ENCODE measurements at regions of chr1 and their contacts with region 1.

Region 1: DNA sequence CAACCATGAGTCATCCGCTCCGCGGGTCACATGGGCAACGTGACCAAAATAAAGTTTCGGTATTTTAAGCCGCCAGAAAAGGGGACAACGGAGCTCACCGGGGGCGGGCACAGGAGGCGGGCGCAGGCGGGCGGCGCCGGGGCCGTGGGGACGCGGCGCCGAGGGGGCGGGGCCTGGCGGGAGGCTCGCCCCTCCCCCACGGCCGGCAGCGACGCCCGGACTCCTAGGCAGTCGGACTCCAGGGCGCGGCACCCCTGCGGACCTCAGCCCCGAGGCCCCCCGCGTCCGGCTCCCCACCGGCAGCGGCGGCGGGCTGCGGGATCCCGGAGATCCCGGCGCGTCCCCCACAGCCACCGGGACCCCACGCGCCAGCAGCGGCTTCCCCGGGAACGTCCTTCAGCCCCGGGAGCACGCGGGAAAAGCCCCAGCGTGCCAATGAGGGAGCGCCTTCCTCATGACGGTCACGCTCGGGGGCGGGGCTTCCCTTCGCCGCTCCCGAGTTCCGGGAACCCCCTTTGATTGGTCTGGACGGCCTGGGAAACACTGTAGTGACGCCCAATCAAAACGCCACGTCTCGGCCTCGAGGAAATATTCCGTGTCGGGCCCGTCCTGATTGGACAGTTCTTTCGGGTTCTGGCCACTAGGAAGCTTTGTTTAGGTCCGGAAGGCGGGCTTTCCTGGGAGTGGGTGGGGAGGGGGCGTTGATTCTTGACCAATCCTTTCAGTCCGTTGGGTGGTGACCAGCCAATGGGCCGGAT is 515 bp upstream of the CAMTA1 start:
- DNase-seq: peak; percentile 100

Region 2: DNA sequence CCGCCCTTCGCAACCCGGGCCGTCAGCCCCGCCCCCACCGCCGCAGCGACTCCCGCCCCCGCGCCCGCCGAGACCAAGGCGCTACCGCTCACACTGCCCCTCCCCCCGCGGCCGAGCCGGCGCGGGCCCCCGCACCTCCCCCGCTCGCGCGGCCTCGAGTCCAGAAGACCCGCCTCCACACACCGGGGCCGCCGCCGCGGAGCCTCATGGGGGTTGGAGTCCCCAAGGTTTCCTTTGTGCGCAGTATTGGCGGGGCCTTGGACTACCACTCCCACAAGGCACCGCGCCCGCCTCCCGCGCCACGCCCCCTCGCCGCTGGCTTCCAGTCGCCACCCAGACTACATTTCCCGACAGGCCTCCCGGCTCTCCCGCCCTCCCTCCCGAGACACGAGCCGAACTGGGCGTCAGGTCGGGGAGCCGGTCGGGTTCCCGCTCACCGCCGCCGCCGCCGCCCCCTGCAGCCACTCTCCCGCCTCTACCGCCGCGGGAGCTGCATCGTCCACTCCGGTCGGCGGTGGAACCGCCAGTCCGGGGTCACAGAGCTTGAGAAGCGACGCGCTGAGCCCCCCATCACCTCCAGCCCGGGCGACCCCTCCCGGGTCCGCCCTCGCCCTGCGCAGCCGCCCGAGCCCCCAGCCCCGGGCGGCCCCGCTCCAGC is 171.2 kb before region 1 on chr1 and contains the start of gene PHF13:
- intact Hi-C with region 1: loop called (anchors 10 kb)
- DNase-seq: peak; percentile 100
- total RNA-seq, gene PHF13: 9.3 TPM

Region 3: GRCh38 chr1:6701437-6702153 is 83.1 kb before region 1 on chr1 and contains the start of gene DNAJC11:
- intact Hi-C with region 1: loop called (anchors 5 kb)
- DNase-seq: peak; percentile 96
- total RNA-seq, gene DNAJC11: 49.4 TPM

Region 4: DNA sequence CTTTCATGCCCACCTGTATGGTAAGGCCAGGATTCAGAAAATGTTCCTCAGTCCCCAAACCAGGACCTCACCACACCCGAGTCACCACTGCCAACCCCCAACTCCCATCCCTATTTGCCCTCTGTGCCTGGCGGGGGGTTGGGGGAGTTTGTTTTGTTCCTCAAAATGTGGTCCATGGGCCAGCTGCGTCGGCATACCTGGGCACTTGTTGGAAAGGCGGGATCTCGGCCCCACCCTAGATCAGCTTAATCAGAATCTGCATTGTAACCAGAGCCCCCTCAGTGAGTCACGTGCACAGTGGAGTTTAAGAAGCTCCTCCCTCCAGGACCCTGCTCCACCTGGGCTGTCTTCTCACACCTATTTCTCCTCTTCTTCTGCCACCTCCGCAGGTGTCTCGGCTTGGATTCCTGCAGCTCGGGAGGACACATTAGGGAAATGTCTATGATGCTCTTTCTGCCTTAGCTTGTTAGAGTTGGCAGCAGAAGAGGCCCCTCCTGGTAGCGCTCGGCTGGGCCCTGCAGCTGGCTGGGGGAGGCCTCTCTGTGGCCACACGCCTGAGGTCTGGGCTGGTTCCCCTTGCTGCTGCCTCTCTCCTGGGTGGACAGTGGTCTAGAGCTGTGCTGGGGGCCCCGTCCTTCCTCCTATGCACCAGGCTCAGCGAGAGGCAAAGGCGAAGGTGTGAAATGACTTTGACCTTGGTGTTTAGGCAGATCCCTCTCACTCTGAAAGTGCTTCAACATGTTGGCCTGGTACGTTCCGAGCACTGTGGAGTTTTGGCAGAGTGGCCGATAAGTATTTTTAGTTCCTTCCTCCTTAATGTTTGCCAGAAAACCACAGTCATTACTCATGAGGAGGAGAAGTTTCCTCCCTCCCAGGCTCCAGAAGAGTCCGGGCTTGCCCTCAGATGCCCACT is 41.3 kb before region 1 on chr1:
- intact Hi-C with region 1: loop called (anchors 5 kb)
- DNase-seq: peak; percentile 75

Region 5: DNA sequence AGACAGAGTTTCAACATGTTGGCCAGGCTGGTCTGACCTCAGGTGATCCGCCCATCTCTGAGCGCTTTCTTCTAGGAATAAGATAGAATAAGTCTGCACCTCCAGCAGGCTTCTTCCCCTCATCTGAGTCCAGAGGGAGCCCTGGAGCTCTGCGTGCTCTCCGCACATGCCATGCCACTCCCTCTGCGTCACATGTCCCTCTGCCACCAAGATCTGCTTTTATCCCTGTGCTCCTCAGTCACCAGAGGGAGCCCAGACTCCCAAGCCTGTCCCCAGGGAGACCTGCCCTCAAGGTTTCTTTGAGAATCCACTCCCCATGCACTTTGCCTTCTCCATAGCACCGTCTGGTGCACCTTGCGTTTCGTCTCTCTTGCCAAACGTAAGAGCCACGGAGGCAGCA is 213.5 kb after region 1 on chr1:
- intact Hi-C with region 1: no loop called
- DNase-seq: peak; percentile 73

Measured in cardiac septum (tissue), 1 donor.